HCT116 (cell line): ENCODE measurements at regions of chr6 and their contacts with region 1.

Region 1: GRCh38 chr6:36678518-36679027 is at the start of gene CDKN1A:
- DNase-seq: peak; percentile 68
- ATAC-seq: peak; percentile 80
- H3K4me3 ChIP-seq: peak within 1 kb of the TSS; percentile 81 to 93
- H3K27ac ChIP-seq: peak within 1 kb of the TSS; percentile 64
- H3K4me1 ChIP-seq: peaks cover 60 to 74% of the 10 kb centered on the region in 2 experiments
- H3K27me3 ChIP-seq: no peaks in the 10 kb centered on the region
- CTCF ChIP-seq: no peak
- POLR2A ChIP-seq: peak; percentile 98
- RAD21 ChIP-seq: no peak
- total RNA-seq, gene CDKN1A: 179 TPM

Region 2: DNA sequence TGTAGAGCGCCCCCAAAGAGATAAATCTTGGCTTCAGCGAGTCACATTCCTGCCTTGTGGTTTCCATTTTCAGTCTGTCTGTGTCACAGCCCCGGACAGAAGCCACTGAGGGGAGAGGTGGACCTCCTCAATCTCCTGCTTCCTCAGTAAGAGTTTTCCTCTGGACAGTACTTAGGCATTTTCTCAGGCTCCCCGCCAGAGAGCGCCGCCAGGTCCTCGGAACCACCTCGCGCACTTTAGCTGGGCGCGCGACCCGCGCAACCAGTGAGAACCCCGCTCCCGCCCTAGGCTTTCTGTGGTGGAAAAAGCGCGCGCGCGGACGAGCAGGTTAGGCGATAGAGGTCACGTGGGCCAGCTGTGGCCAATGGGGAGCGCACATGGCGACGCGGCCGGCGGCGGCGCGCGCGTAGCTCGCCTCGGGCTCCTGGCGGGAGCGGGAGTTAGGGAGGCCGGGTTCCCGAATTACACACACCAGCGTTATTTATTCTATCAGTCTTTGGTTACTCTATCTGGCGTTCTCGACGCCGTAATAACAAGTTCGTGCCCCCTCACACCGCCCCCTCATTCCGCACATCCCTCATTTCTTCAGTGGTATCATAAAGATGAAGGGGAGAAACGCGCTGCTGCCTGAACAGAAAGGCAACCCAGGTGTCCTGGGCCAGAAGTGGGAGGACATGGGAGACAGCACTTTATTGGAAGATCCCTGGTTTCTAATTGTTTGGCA is 255.3 kb before region 1 on chr6:
- CTCF ChIA-PET with region 1: no interaction called
- POLR2A ChIA-PET with region 1: no interaction called
- RAD21 ChIA-PET with region 1: no interaction called
- intact Hi-C with region 1: loop called (anchors 5 kb)
- DNase-seq: peak; percentile 95
- ATAC-seq: peak; percentile 97
- H3K4me3 ChIP-seq: peak overlapping the region; percentile 33 to 49
- H3K27ac ChIP-seq: no peak overlapping the region
- H3K4me1 ChIP-seq: peaks cover 6 to 26% of the 10 kb centered on the region in 2 experiments; a peak in 3 of 4 replicates
- H3K27me3 ChIP-seq: no peaks in the 10 kb centered on the region
- CTCF ChIP-seq: peak; percentile 58 to 73 (median 61)
- POLR2A ChIP-seq: peak; percentile 63
- RAD21 ChIP-seq: peak; percentile 83

Region 3: GRCh38 chr6:36623547-36624459 is 54.8 kb before region 1 on chr6:
- CTCF ChIA-PET with region 1: interaction called, 5 read pairs
- POLR2A ChIA-PET with region 1: interaction called, 4 read pairs
- RAD21 ChIA-PET with region 1: no interaction called
- intact Hi-C with region 1: loop called (anchors 1 kb)
- DNase-seq: peak; percentile 58
- ATAC-seq: peak; percentile 92
- H3K4me3 ChIP-seq: no peak overlapping the region
- H3K27ac ChIP-seq: no peak overlapping the region
- H3K4me1 ChIP-seq: peaks cover 0 to 11% of the 10 kb centered on the region in 2 experiments; a peak in 2 of 4 replicates
- H3K27me3 ChIP-seq: no peaks in the 10 kb centered on the region
- CTCF ChIP-seq: peak; percentile 92 to 96 (median 93)
- POLR2A ChIP-seq: no peak
- RAD21 ChIP-seq: peak; percentile 98

Region 4: GRCh38 chr6:36642913-36643817 is 35.4 kb before region 1 on chr6:
- CTCF ChIA-PET with region 1: no interaction called
- POLR2A ChIA-PET with region 1: interaction called, 10 read pairs
- RAD21 ChIA-PET with region 1: interaction called in 1 of 2 experiments, 5 read pairs
- intact Hi-C with region 1: loop called (anchors 1 kb)
- DNase-seq: no peak
- ATAC-seq: peak; percentile 85
- H3K4me3 ChIP-seq: no peak overlapping the region
- H3K27ac ChIP-seq: peak overlapping the region; percentile 17; the same call in 1 of the 2 replicates
- H3K4me1 ChIP-seq: peaks cover 19 to 28% of the 10 kb centered on the region in 2 experiments; a peak in 3 of 4 replicates
- H3K27me3 ChIP-seq: no peaks in the 10 kb centered on the region
- CTCF ChIP-seq: no peak
- POLR2A ChIP-seq: no peak
- RAD21 ChIP-seq: no peak

Region 5: GRCh38 chr6:36666726-36667591 is 11.6 kb before region 1 on chr6:
- CTCF ChIA-PET with region 1: interaction called, 4 read pairs
- POLR2A ChIA-PET with region 1: interaction called, 119 read pairs
- RAD21 ChIA-PET with region 1: interaction called in 1 of 2 experiments, 5 read pairs
- intact Hi-C with region 1: no loop called
- DNase-seq: peak; percentile 59
- ATAC-seq: peak; percentile 91
- H3K4me3 ChIP-seq: peak overlapping the region; percentile 10 to 27
- H3K27ac ChIP-seq: peak overlapping the region; percentile 83
- H3K4me1 ChIP-seq: peaks cover 50 to 53% of the 10 kb centered on the region in 2 experiments
- H3K27me3 ChIP-seq: no peaks in the 10 kb centered on the region
- CTCF ChIP-seq: no peak
- POLR2A ChIP-seq: no peak
- RAD21 ChIP-seq: 0 out of 2 replicates have a peak, but pooled peaks have one; percentile 19

Region 6: GRCh38 chr6:36724514-36725390 is 46.2 kb after region 1 on chr6:
- CTCF ChIA-PET with region 1: no interaction called
- POLR2A ChIA-PET with region 1: interaction called, 4 read pairs
- RAD21 ChIA-PET with region 1: no interaction called
- intact Hi-C with region 1: loop called (anchors 1 kb)
- DNase-seq: peak; percentile 78
- ATAC-seq: peak; percentile 94
- H3K4me3 ChIP-seq: no peak overlapping the region
- H3K27ac ChIP-seq: no peak overlapping the region
- H3K4me1 ChIP-seq: no peaks in the 10 kb centered on the region; a peak in 1 of 4 replicates
- H3K27me3 ChIP-seq: no peaks in the 10 kb centered on the region
- CTCF ChIP-seq: peak; percentile 70 to 89 (median 74)
- POLR2A ChIP-seq: no peak
- RAD21 ChIP-seq: peak; percentile 96

Region 7: GRCh38 chr6:36759148-36759759 is 80.7 kb after region 1 on chr6:
- CTCF ChIA-PET with region 1: interaction called, 4 read pairs
- POLR2A ChIA-PET with region 1: interaction called, 3 read pairs
- RAD21 ChIA-PET with region 1: no interaction called
- intact Hi-C with region 1: loop called (anchors 5 kb)
- DNase-seq: peak; percentile 37
- ATAC-seq: peak; percentile 95
- H3K4me3 ChIP-seq: peak overlapping the region; percentile 23 to 51
- H3K27ac ChIP-seq: no peak overlapping the region
- H3K4me1 ChIP-seq: peaks cover 4 to 29% of the 10 kb centered on the region in 2 experiments; a peak in 3 of 4 replicates
- H3K27me3 ChIP-seq: no peaks in the 10 kb centered on the region
- CTCF ChIP-seq: peak; percentile 87 to 99 (median 98)
- POLR2A ChIP-seq: no peak
- RAD21 ChIP-seq: peak; percentile 93